ENCODE measurements at regions of chr10 and their contacts with region 1.

Region 1: DNA sequence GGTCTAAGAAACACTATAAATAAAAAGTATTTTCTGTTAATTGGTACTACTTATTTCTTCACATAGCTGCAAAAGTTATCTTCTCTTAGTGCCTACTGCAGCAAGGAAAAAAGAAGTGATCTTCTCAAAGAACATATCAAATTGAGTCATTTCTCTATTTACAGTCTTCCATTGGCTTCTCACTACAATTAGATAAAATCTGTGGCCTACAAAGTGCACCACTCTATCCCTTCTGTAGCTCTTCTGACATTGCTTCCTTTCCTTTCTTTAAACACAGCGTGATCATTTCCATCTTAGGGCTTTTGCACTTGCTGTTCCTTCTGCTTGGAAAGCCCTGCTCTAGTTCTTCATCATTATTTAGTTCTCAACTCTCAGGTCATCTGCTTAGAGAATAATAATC is 44.7 kb downstream of the MXI1 start:
- DNase-seq: no peak
- H3K4me3 Mint-ChIP-seq: no peak overlapping the region
- H3K27ac Mint-ChIP-seq: no peak overlapping the region
- H3K4me1 Mint-ChIP-seq: peaks cover 47% of the 10 kb centered on the region
- H3K27me3 Mint-ChIP-seq: peaks cover 24% of the 10 kb centered on the region

Region 2: DNA sequence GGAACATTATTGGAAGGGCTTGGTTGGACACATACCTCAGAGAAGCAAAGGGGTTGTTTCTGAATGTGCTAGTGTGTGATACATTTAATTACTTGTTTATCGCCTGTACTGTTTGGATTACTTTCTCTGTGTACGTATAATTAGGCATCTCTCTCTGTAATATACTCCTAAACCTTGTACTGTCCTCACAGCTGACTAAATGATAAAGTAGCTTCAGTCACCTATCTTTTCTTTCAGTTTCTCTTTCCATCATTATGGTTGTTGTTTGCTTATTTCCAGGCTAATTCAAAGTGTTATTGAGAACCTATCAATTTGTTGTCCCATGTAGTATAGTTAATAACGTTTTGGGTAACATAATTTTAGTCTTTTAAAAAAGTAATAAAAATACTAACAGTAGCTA is 10.7 kb before region 1 on chr10:
- intact Hi-C with region 1: loop called (anchors 1 kb)
- DNase-seq: no peak
- H3K4me3 Mint-ChIP-seq: no peak overlapping the region
- H3K27ac Mint-ChIP-seq: no peak overlapping the region
- H3K4me1 Mint-ChIP-seq: peaks cover 18% of the 10 kb centered on the region
- H3K27me3 Mint-ChIP-seq: peaks cover 20% of the 10 kb centered on the region

Region 3: GRCh38 chr10:110269374-110270318 is 17.5 kb after region 1 on chr10:
- intact Hi-C with region 1: loop called (anchors 2 kb)
- DNase-seq: no peak
- H3K4me3 Mint-ChIP-seq: no peak overlapping the region
- H3K27ac Mint-ChIP-seq: no peak overlapping the region
- H3K4me1 Mint-ChIP-seq: peaks cover 37% of the 10 kb centered on the region
- H3K27me3 Mint-ChIP-seq: peaks cover 12% of the 10 kb centered on the region

Region 4: DNA sequence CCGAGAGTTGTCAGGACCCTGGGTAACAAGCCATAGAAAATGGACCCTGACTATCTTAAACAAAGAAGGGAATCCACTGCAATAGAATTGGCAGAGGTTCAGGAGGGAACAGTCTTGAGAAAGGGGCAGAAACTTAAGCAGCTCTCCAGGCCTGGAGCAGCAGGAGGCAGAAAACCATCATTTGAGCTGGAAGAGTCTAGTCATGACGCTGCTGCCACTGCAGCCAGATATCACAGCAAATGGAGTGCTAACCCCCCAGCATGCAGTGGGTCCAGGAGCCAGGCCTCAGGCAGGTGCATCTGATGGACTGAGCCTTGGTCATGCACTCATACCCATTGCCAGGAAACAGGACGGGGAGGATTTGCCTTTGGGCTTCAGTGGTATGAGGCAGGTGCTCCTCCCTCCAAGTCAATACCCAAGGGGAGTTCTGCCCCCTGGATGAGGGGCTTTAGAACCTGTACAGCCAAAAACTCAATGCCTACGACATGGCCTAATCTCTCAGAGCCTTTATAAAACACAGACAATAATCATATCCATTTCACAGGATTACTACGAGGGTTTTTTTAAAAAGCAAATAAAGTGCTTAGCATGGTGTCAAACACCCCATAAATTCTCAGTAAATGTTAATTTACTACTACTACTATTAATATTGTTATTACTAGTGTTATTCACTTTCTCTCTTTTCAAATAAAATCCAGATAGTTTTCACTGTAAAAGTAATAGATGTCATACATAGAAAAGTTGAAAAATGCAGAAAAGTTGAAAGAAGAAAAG is 276.3 kb after region 1 on chr10:
- intact Hi-C with region 1: loop called (anchors 2 kb)
- DNase-seq: no peak
- H3K4me3 Mint-ChIP-seq: peak overlapping the region; percentile 64
- H3K27ac Mint-ChIP-seq: peak overlapping the region; percentile 94
- H3K4me1 Mint-ChIP-seq: peaks cover 83% of the 10 kb centered on the region
- H3K27me3 Mint-ChIP-seq: no peaks in the 10 kb centered on the region